ENCODE measurements at regions of chr13 and their contacts with region 1.

Region 1: GRCh38 chr13:110225609-110226562 is 81.1 kb downstream of the COL4A1 start:
- DNase-seq: no peak
- CTCF ChIP-seq: no peak

Region 2: GRCh38 chr13:110047496-110047895 is 178.4 kb before region 1 on chr13:
- in situ Hi-C with region 1: no loop called
- DNase-seq: no peak
- CTCF ChIP-seq: no peak

Region 3: GRCh38 chr13:110412132-110412914 is 186.4 kb after region 1 on chr13:
- in situ Hi-C with region 1: loop called (anchors 10 kb)
- DNase-seq: peak; percentile 86
- CTCF ChIP-seq: peak; percentile 84

Region 4: DNA sequence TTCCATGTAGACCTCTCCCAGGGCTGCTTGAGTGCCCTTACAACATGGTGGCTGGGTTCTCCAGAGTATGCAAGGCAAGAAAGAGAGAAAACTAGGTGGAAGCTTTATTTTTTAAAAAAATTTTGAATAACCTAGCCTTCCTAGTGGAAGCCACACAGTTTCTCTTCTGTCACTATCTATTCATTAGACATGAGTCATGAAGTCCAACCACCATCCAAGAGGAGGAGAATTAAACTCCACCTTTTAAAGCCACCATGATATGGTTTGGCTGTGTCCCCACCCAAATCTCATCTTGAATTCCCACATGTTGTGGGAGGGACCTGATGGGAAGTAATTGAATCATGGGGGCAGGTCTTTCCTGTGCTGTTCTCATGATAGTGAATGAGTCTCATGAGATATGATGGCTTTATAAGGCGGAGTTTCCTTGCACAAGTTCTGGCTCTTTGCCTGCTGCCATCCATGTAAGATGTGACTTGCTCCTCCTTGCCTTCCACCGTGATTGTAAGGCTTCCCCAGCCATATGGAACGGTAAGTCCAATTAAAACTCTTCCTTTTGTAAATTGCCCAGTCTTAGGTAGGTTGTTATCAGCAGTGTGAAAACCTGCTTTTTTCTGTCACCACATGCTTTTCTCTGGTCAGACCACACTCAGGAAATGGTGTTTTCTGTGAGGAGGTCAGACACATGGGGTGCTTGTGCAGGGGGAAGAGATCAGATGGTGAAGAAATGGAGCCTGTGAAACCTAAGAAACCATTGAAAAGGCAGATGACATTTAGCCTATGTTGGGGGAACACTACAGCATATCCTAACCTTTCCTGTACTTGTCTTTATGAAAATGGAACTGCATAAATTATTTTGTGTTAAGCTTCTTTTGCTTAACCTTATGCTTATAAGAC is 631.3 kb after region 1 on chr13:
- in situ Hi-C with region 1: no loop called
- DNase-seq: no peak
- CTCF ChIP-seq: no peak